Body of pancreas (tissue), 4 donors: ENCODE measurements at regions of chr1 and their contacts with region 1.

Region 1: GRCh38 chr1:89762779-89763648 is 57.8 kb upstream of the LRRC8D start:
- DNase-seq: peak; percentile 82 to 87 (median 84)
- ATAC-seq: peak; percentile 97
- H3K4me3 ChIP-seq: peak overlapping the region in 1 of 2 donors; percentile 21
- H3K27ac ChIP-seq: peak overlapping the region in 2 of 4 donors; percentile 19 to 30
- H3K4me1 ChIP-seq: peaks cover 16% of the 10 kb centered on the region
- H3K27me3 ChIP-seq: peaks cover 0 to 5% of the 10 kb centered on the region in 2 donors
- CTCF ChIP-seq: peak; percentile 90 to 98 (median 97)
- POLR2A ChIP-seq: peak in 1 of 3 donors; percentile 10

Region 2: DNA sequence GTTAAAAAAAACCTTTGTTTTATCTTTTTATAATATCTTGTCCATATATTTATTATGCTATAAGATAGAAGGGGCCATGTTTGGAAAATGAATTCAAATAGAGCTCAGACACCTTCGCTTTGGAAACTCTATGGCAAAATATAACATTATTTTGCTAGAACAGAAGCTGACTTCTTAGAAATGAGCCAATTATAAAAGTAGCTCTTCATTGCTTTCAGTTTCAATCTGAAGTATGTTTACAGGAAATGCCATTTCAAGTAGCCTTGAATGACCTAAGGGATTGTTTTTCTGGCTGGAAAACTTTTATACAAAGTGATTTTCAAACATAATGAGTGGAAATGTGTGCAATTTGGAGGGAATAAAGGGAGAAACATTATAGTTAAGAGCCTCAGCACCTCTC is 452.5 kb before region 1 on chr1:
- intact Hi-C with region 1: no loop called
- DNase-seq: no peak
- ATAC-seq: no peak
- H3K4me3 ChIP-seq: no peak overlapping the region
- H3K27ac ChIP-seq: peak overlapping the region in 1 of 4 donors; percentile 32
- H3K4me1 ChIP-seq: no peaks in the 10 kb centered on the region
- H3K27me3 ChIP-seq: no peaks in the 10 kb centered on the region
- CTCF ChIP-seq: no peak
- POLR2A ChIP-seq: no peak

Region 3: GRCh38 chr1:89483010-89483756 is 279.8 kb before region 1 on chr1:
- intact Hi-C with region 1: loop called (anchors 10 kb)
- DNase-seq: peak; percentile 71 to 87 (median 82)
- ATAC-seq: peak; percentile 77
- H3K4me3 ChIP-seq: no peak overlapping the region
- H3K27ac ChIP-seq: no peak overlapping the region
- H3K4me1 ChIP-seq: no peaks in the 10 kb centered on the region
- H3K27me3 ChIP-seq: no peaks in the 10 kb centered on the region
- CTCF ChIP-seq: peak; percentile 56 to 78 (median 69)
- POLR2A ChIP-seq: no peak

Region 4: DNA sequence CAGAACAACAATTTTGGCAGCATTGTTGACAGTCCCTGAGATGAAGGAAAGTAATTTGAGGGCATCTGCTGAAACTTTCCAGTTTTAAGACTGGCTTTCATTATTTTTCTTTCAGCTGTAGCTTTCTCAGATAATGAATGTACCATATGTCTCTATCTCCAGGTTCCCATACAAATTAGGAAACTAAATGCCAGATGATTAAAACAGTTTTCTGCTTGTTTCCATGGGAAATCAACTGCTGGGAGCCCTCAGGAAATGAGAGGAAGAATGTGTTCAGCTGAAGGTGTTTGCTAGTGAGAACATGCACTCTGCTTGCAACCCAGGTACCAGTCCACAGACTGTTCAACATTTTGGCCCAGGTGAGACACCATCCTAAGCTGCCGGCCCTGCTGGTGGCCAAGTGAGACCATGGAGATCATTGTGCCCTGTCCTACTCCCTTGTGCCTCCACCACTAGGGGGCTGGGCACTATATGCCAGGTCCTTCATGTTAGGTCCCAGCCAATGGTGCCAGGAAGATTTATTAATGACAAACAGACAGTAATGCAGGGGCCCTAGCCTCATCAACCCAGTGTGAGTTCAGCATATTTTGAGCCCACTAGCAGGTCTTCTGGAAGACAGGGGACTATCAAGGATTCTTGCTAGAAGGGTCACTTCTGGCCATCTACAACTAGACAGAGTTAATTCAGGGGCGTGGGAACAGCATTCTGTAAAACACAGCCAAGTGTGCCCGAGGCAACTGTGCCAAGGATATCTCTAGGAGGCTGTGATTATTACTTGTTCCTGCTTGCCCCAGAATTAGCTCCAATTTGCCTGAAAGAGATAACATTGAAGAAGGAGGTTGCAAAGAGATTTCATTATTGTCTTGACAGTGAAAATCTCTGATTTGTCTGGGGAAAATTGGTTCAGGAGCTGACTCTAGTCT is 147.1 kb before region 1 on chr1:
- intact Hi-C with region 1: loop called (anchors 10 kb)
- DNase-seq: peak in 2 of 4 donors; percentile 21 to 45
- ATAC-seq: no peak
- H3K4me3 ChIP-seq: no peak overlapping the region
- H3K27ac ChIP-seq: no peak overlapping the region
- H3K4me1 ChIP-seq: no peaks in the 10 kb centered on the region
- H3K27me3 ChIP-seq: no peaks in the 10 kb centered on the region
- CTCF ChIP-seq: peak in 4 of 7 experiments; percentile 8 to 31 (median 17)
- POLR2A ChIP-seq: no peak